ENCODE measurements at regions of chr5 and their contacts with region 1.

Region 1: GRCh38 chr5:65674749-65675148 is 47.2 kb downstream of the SGTB start:
- DNase-seq: no peak
- H3K4me3 Mint-ChIP-seq: no peak overlapping the region
- H3K27ac Mint-ChIP-seq: no peak overlapping the region
- H3K4me1 Mint-ChIP-seq: no peaks in the 10 kb centered on the region
- H3K27me3 Mint-ChIP-seq: no peaks in the 10 kb centered on the region
- CTCF ChIP-seq: no peak

Region 2: GRCh38 chr5:65229841-65230240 is 444.9 kb before region 1 on chr5:
- CTCF ChIA-PET with region 1: no interaction called
- POLR2A ChIA-PET with region 1: no interaction called
- intact Hi-C with region 1: no loop called
- DNase-seq: no peak
- H3K4me3 Mint-ChIP-seq: no peak overlapping the region
- H3K27ac Mint-ChIP-seq: no peak overlapping the region
- H3K4me1 Mint-ChIP-seq: no peaks in the 10 kb centered on the region
- H3K27me3 Mint-ChIP-seq: no peaks in the 10 kb centered on the region
- CTCF ChIP-seq: no peak

Region 3: DNA sequence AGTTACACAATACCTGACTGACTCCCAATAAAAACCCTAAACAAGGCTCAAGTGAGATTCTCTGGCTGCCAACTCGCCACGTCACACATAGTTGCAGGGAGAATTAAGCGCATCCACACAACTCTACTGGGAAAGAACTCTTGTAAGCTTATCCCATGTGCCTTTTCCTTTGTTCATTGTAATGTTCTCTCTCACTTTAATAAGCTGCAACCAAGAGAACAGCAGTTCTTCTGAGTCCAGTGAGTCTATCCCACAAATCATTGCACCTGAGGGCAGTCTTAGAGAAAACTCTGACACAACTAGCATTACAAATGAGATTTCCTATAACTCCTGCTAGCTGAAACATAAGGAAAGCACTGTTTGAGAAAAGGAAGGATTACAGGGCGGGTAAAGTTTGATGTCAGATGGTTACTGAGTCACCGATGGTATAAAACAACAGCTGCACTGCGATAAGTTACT is 139.2 kb before region 1 on chr5:
- CTCF ChIA-PET with region 1: no interaction called
- POLR2A ChIA-PET with region 1: no interaction called
- intact Hi-C with region 1: no loop called
- DNase-seq: peak; percentile 3
- H3K4me3 Mint-ChIP-seq: no peak overlapping the region
- H3K27ac Mint-ChIP-seq: no peak overlapping the region
- H3K4me1 Mint-ChIP-seq: peaks cover 10% of the 10 kb centered on the region
- H3K27me3 Mint-ChIP-seq: no peaks in the 10 kb centered on the region
- CTCF ChIP-seq: no peak

Region 4: GRCh38 chr5:65663804-65664521 is 10.8 kb before region 1 on chr5:
- CTCF ChIA-PET with region 1: interaction called, 12 read pairs
- POLR2A ChIA-PET with region 1: interaction called, 3 read pairs
- intact Hi-C with region 1: no loop called
- DNase-seq: peak; percentile 31
- H3K4me3 Mint-ChIP-seq: no peak overlapping the region
- H3K27ac Mint-ChIP-seq: no peak overlapping the region
- H3K4me1 Mint-ChIP-seq: no peaks in the 10 kb centered on the region
- H3K27me3 Mint-ChIP-seq: no peaks in the 10 kb centered on the region
- CTCF ChIP-seq: peak; percentile 31

Measured in MCF 10A (cell line).